Tibial artery (tissue), 4 donors: ENCODE measurements at regions of chrX and their contacts with region 1.

Region 1: DNA sequence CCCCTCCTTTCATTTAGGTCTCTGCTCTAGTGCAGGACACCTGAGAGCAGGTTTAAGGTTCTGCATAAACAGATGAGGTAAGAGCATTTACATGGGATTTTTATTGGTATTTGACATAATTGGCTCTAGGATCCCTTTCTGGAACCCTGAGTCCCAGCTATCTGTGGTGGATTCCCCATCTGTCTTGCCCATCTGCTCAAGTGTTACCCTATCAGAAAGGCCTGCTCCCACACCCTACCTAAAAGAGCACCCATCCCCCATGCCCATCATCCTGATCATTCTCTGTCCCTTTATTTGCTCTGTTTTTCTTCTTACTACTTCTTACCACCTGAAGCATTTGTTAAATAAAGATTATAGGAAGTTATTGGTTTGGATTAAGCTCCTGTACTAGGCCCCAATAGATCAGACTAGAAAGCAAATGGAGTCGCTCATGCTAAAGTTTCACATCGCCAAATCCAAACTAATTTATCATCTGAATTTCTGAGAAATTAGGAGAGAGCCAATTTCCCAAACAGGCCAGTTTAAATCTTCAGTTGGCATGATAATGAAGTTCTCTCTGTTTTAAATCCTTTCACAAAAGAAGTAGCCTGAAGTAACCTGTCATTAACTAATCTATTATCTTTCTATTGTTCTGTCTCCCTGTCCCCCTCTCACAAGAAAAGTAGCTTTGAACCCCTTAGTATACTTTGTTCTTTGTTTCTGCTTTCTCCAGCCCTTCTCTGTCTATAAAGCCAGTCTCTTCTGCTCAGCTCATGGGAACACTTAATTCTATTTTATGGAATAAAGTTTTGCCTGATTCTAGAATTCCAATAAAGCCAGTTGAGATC is 178.6 kb downstream of the ZNF674 start:
- DNase-seq: no peak
- H3K4me3 ChIP-seq: no peak overlapping the region
- H3K27ac ChIP-seq: no peak overlapping the region
- H3K4me1 ChIP-seq: no peaks in the 10 kb centered on the region
- H3K27me3 ChIP-seq: no peaks in the 10 kb centered on the region
- CTCF ChIP-seq: no peak

Region 2: GRCh38 chrX:45524296-45524695 is 842.3 kb before region 1 on chrX:
- intact Hi-C with region 1: loop called (anchors 5 kb)
- DNase-seq: no peak
- H3K4me3 ChIP-seq: no peak overlapping the region
- H3K27ac ChIP-seq: no peak overlapping the region
- H3K4me1 ChIP-seq: no peaks in the 10 kb centered on the region
- H3K27me3 ChIP-seq: no peaks in the 10 kb centered on the region
- CTCF ChIP-seq: no peak

Region 3: GRCh38 chrX:46561824-46562657 is 195.4 kb after region 1 on chrX:
- intact Hi-C with region 1: no loop called
- DNase-seq: no peak
- H3K4me3 ChIP-seq: no peak overlapping the region
- H3K27ac ChIP-seq: no peak overlapping the region
- H3K4me1 ChIP-seq: peaks cover 0 to 4% (median 0%) of the 10 kb centered on the region in 4 donors
- H3K27me3 ChIP-seq: no peaks in the 10 kb centered on the region
- CTCF ChIP-seq: no peak